ENCODE measurements at regions of chr10 and their contacts with region 1.

Region 1: GRCh38 chr10:78616130-78616695 is 452.6 kb upstream of the ZMIZ1 start:
- DNase-seq: no peak
- H3K4me3 Mint-ChIP-seq: no peak overlapping the region
- H3K27ac Mint-ChIP-seq: no peak overlapping the region
- H3K4me1 Mint-ChIP-seq: peaks cover 9% of the 10 kb centered on the region
- H3K27me3 Mint-ChIP-seq: peaks cover 58% of the 10 kb centered on the region
- CTCF ChIP-seq: no peak

Region 2: GRCh38 chr10:78588194-78588811 is 27.9 kb before region 1 on chr10:
- CTCF ChIA-PET with region 1: interaction called, 10 read pairs
- intact Hi-C with region 1: no loop called
- DNase-seq: no peak
- H3K4me3 Mint-ChIP-seq: no peak overlapping the region
- H3K27ac Mint-ChIP-seq: no peak overlapping the region
- H3K4me1 Mint-ChIP-seq: no peaks in the 10 kb centered on the region
- H3K27me3 Mint-ChIP-seq: peaks cover 47% of the 10 kb centered on the region
- CTCF ChIP-seq: no peak

Measured in Calu3 (cell line).